Tibial artery (tissue), 4 donors: ENCODE measurements at regions of chr18 and their contacts with region 1.

Region 1: DNA sequence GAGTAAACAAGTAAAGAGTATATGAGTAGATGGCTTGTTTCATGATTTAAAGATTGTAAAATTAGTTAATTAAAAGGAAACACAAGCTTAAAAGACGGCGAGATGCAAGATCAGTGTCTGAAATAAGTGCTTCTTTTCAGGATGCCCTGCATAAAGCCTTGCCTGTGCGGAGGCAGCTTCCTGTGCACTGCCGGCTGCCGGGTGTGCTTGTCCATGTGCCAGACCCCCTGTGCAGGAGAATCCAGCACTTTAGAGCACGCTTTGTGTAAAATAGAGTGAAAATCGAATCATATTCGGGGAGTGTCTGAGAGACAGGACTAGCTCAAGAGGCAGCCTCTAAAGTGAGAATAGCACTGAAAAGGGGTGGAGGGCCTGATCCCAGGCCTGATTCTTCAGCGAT is 154.7 kb downstream of the CHST9 start:
- DNase-seq: no peak
- H3K4me3 ChIP-seq: no peak overlapping the region
- H3K27ac ChIP-seq: no peak overlapping the region
- H3K4me1 ChIP-seq: no peaks in the 10 kb centered on the region
- H3K27me3 ChIP-seq: no peaks in the 10 kb centered on the region
- CTCF ChIP-seq: no peak

Region 2: GRCh38 chr18:26999797-27000196 is 30.6 kb before region 1 on chr18:
- intact Hi-C with region 1: loop called (anchors 1 kb)
- DNase-seq: no peak
- H3K4me3 ChIP-seq: no peak overlapping the region
- H3K27ac ChIP-seq: no peak overlapping the region
- H3K4me1 ChIP-seq: no peaks in the 10 kb centered on the region
- H3K27me3 ChIP-seq: no peaks in the 10 kb centered on the region
- CTCF ChIP-seq: no peak